ENCODE measurements at regions of chr1 and their contacts with region 1.

Region 1: DNA sequence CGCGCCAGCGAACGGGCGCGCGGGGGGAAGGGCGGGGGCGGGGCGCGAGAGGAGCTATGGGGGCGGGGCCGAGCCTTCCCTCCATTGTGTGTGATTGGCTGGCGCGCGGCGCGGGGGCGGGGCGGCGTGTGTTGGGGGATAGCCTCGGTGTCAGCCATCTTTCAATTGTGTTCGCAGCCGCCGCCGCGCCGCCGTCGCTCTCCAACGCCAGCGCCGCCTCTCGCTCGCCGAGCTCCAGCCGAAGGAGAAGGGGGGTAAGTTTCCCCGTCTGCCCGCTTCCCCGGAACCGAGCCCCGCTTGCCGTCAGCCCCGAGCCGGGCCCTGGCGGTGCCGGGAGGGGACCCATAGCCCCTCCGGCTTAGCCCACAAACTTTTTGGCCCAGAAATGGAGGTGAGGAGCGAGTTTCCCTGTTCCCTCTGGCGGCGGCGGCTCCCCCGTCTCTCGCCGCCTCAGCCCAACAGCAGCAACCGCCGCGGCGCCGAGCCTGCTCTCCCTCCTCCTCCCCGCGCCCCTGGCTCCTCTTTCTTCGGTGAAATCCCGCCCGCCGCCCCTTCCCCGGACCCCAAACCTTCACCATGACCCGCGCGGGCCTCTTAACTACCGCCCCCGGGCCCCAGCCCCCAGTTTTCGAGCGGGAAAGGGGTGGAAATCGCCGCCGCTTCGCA is at the start of gene H3-3A:
- DNase-seq: peak; percentile 93 to 97 (median 96)
- H3K4me3 ChIP-seq: peak within 1 kb of the TSS; percentile 85 to 100 (median 95)
- H3K27ac ChIP-seq: peak within 1 kb of the TSS; percentile 94 to 98
- H3K4me1 ChIP-seq: peaks cover 32 to 47% (median 36%) of the 10 kb centered on the region in 4 experiments
- H3K27me3 ChIP-seq: no peaks in the 10 kb centered on the region

Region 2: DNA sequence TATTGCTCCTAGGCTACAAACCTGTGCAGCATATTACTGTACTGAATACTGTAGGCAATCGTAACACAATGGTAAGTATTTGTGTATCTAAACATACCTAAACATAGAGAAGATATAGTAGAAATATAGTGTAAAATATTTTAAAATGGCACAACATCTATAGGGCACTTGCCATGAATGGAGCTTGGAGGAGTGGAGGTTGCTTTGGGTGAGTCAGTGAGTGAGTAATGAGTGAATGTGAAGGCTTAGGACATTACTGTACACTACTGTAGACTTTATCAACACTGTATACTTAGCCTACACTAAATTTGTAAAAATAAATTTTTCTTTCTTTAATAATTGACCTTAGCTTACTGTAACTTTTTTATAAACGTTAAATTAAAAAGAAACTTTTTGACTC is 129.6 kb before region 1 on chr1:
- CTCF ChIA-PET with region 1: no interaction called
- POLR2A ChIA-PET with region 1: no interaction called
- DNase-seq: no peak
- H3K4me3 ChIP-seq: no peak overlapping the region
- H3K27ac ChIP-seq: no peak overlapping the region
- H3K4me1 ChIP-seq: peaks cover 0 to 10% (median 7%) of the 10 kb centered on the region in 4 experiments
- H3K27me3 ChIP-seq: no peaks in the 10 kb centered on the region

Region 3: GRCh38 chr1:225999227-225999911 is 63.3 kb before region 1 on chr1 and contains the start of gene SDE2:
- CTCF ChIA-PET with region 1: interaction called, 61 read pairs
- POLR2A ChIA-PET with region 1: interaction called, 76 read pairs
- DNase-seq: peak; percentile 99 to 100 (median 100)
- H3K4me3 ChIP-seq: peak within 1 kb of the TSS; percentile 76 to 100 (median 97)
- H3K27ac ChIP-seq: peak within 1 kb of the TSS; percentile 99 to 100
- H3K4me1 ChIP-seq: peaks cover 67 to 84% (median 73%) of the 10 kb centered on the region in 4 experiments
- H3K27me3 ChIP-seq: no peaks in the 10 kb centered on the region

Region 4: DNA sequence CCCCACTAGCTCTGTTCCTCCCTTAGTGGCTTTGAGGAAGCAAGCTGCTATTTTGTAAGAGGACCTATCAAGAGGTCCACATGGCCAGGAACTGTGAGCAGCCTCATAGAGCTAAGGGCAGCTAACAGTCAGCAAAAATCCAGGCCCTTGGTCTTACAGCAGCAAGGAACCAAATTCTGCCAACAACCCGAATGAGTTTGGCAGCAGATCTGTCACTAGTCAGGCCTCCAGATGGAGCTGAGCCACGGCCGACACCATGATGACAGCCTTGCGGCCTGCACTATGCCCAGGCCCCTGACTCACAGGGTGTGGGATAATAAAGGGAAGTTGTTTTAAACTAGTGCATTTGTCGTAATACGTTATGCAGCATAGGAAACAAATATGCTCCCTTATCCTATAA is 28.2 kb before region 1 on chr1:
- CTCF ChIA-PET with region 1: interaction called, 10 read pairs
- POLR2A ChIA-PET with region 1: interaction called, 22 read pairs
- DNase-seq: peak; percentile 97 to 100 (median 99)
- H3K4me3 ChIP-seq: peak overlapping the region in 1 of 7 experiments; percentile 13
- H3K27ac ChIP-seq: peak overlapping the region in 1 of 2 experiments; percentile 51
- H3K4me1 ChIP-seq: peaks cover 19 to 47% (median 25%) of the 10 kb centered on the region in 4 experiments
- H3K27me3 ChIP-seq: no peaks in the 10 kb centered on the region

Region 5: DNA sequence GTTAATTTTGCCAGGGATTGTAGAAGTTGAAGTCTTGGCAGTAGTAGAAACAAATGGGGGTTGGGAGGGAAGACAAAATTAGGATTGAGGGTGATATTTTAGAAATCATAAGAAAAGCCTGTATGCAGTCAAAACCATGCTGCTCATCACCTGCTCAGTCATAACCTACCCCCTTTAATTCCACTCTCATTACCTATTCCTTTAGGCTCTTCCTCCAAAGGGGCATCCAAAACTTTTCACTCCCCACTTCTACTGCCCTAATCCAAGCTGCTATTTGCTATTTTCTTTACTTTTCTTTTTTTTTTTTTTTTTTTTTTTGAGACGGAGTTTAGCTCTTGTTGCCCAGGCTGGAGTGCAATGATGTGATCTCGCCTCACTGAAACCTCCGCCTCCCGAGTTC is 11.4 kb after region 1 on chr1:
- CTCF ChIA-PET with region 1: interaction called, 13 read pairs
- POLR2A ChIA-PET with region 1: interaction called, 5 read pairs
- DNase-seq: no peak
- H3K4me3 ChIP-seq: no peak overlapping the region
- H3K27ac ChIP-seq: no peak overlapping the region
- H3K4me1 ChIP-seq: peaks cover 0 to 7% (median under 1%) of the 10 kb centered on the region in 4 experiments
- H3K27me3 ChIP-seq: no peaks in the 10 kb centered on the region

Measured in common myeloid progenitor, CD34-positive (primary cell).